ENCODE measurements at regions of chr12 and their contacts with region 1.

Region 1: DNA sequence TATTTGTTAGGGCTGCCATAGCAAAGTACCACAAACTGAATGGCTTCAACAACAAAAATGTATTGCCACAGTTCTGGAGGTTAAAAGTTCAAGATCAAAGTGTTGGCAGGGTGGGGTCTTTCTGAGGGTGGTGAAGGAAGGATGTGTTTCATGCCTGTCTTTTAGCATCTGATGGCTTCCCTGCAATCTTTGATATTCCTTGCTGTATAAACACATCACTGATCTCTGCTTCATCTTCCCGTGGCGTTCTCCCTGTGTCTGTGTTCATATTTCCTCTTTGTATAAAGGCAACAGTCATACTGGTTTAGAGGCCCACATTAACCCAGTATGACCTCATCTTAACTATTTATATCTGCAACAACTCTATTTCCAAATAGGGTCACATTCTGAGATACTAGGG is 167.5 kb downstream of the BTG1 start:
- DNase-seq: no peak
- ATAC-seq: peak in 1 of 8 donors; percentile 43
- H3K4me3 ChIP-seq: no peak overlapping the region
- H3K27ac ChIP-seq: no peak overlapping the region
- H3K4me1 ChIP-seq: peaks cover 0 to 43% (median 7%) of the 10 kb centered on the region in 9 donors
- H3K27me3 ChIP-seq: no peaks in the 10 kb centered on the region
- CTCF ChIP-seq: no peak

Region 2: DNA sequence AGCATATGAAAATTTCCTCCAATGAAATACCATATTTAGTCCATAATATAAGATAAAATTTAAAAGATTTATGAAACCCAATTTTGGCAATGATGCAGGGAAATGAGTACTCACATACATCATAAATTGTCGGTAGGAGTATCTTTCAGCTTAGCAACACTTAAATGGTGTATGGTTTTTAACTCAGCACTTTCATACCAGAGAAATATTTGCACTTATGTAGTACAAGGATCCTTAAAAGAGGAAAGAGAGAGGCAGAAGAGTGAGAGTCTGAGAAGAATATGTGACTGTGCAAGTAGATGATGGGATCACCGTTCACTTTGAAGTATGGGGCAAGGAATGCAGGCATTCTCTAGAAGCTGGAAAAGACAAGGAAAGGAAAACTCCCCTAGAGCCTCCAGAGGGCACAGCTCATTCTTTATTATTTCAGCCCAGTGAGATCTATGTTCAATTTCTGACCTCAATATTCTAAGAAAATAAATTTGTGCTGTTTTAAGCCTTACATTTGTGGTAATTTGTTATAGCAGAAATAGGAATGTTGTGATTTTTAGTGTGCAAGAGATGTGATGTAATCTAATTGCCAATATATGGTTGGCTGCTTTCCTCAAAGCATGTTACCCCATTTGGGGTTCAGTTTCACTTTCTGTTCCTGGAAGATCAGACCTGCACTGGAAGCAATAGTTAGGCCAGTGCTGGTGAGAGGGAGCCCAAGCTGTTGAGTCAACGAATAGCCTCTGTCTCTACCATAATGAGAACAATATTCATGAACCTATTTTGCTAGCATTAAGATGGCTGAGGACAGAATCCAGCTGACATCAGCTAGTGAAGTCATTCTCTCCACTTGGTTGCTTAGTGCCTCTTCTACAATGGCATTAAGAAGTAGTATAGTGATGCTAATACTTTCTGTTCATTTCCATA is 415.9 kb before region 1 on chr12:
- intact Hi-C with region 1: loop called in 1 of 10 experiments (anchors 10 kb)
- DNase-seq: no peak
- ATAC-seq: no peak
- H3K4me3 ChIP-seq: no peak overlapping the region
- H3K27ac ChIP-seq: peak overlapping the region in 1 of 10 donors; percentile 42
- H3K4me1 ChIP-seq: peaks cover 0 to 3% (median 0%) of the 10 kb centered on the region in 9 donors
- H3K27me3 ChIP-seq: no peaks in the 10 kb centered on the region
- CTCF ChIP-seq: no peak

Region 3: GRCh38 chr12:91811481-91812287 is 166.5 kb before region 1 on chr12:
- intact Hi-C with region 1: loop called in 1 of 10 experiments (anchors 5 kb)
- DNase-seq: peak; percentile 70 to 71
- ATAC-seq: peak in 6 of 8 donors; percentile 65 to 84 (median 75)
- H3K4me3 ChIP-seq: no peak overlapping the region
- H3K27ac ChIP-seq: peak overlapping the region in 1 of 10 donors; percentile 11
- H3K4me1 ChIP-seq: peaks cover 0 to 8% (median 0%) of the 10 kb centered on the region in 9 donors
- H3K27me3 ChIP-seq: no peaks in the 10 kb centered on the region
- CTCF ChIP-seq: peak; percentile 71 to 90 (median 84)

Region 4: GRCh38 chr12:92085040-92085735 is 107.0 kb after region 1 on chr12:
- intact Hi-C with region 1: no loop called
- DNase-seq: no peak
- ATAC-seq: no peak
- H3K4me3 ChIP-seq: no peak overlapping the region
- H3K27ac ChIP-seq: no peak overlapping the region
- H3K4me1 ChIP-seq: peaks cover 0 to 27% (median 2%) of the 10 kb centered on the region in 9 donors
- H3K27me3 ChIP-seq: no peaks in the 10 kb centered on the region
- CTCF ChIP-seq: no peak